B cell (primary cell): ENCODE measurements at regions of chr4 and their contacts with region 1.

Region 1: GRCh38 chr4:88211473-88212252 is 53.2 kb upstream of the ABCG2 start:
- DNase-seq: peak; percentile 73
- ATAC-seq: peak; percentile 57
- H3K4me3 ChIP-seq: no peak overlapping the region
- H3K4me3 Mint-ChIP-seq: no peak overlapping the region
- H3K27ac ChIP-seq: no peak overlapping the region
- H3K27ac Mint-ChIP-seq: no peak overlapping the region
- H3K4me1 ChIP-seq: no peaks in the 10 kb centered on the region
- H3K4me1 Mint-ChIP-seq: no peaks in the 10 kb centered on the region
- H3K27me3 ChIP-seq: peaks cover 0 to 2% (median 0%) of the 10 kb centered on the region in 4 experiments
- H3K27me3 Mint-ChIP-seq: no peaks in the 10 kb centered on the region
- CTCF ChIP-seq: peak; percentile 89

Region 2: DNA sequence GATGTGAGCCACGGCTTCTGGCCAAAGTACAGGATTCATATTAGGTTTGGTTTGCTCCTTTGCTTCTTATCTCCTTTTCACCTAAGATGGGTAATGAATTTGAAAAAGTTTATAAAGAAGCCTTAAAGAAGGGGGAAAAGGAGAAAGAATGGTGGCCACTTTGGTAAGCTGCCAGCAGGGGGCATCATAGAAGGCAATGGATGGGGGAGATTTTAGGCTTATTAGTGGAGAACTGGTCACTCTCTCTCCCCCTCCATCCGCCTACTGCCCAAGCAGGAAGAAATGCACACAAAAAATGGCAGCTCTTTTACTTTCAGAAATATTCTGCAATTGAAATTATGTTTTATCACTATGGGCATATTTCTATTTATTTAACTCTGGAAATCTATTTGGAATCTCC is 714.5 kb before region 1 on chr4:
- CTCF ChIA-PET with region 1: interaction called, 6 read pairs
- POLR2A ChIA-PET with region 1: no interaction called
- intact Hi-C with region 1: loop called (anchors 2 kb)
- DNase-seq: no peak
- ATAC-seq: no peak
- H3K4me3 ChIP-seq: no peak overlapping the region
- H3K4me3 Mint-ChIP-seq: no peak overlapping the region
- H3K27ac ChIP-seq: no peak overlapping the region
- H3K27ac Mint-ChIP-seq: no peak overlapping the region
- H3K4me1 ChIP-seq: no peaks in the 10 kb centered on the region
- H3K4me1 Mint-ChIP-seq: peaks cover 10% of the 10 kb centered on the region
- H3K27me3 ChIP-seq: no peaks in the 10 kb centered on the region
- H3K27me3 Mint-ChIP-seq: no peaks in the 10 kb centered on the region
- CTCF ChIP-seq: peak; percentile 42

Region 3: DNA sequence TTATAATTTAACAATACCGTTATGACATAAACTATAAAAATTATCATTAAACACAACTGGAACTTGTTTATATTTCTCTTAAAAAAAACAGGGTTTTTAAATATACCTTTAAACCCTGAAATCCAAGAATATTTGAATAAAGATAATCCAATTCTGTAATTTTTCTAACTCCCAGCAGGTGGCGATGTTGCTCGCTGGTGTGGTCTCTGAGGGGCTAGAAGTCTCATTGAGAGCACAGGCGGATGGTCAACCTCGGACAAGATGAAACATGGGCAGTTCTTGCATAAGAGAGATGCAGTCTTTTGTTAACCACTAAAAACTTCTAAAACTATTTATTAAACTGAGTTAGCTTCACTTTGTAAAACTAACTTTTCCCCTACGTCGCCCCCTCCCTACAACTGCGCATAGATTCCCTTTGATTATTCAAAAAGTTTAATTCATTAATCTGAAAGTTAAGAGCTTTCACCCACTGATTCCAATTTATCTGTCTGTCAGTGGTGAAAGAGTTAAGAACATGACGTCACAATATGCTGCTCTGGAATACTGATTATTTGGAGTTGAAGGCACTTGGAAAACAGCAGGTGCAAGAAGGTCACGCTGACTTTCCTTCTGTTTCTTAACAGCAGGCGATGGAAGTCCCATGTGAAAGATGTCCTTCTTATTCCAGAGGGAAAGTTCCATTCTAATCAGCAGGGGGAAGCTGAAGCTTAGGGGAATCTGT is 532.1 kb before region 1 on chr4:
- CTCF ChIA-PET with region 1: interaction called, 20 read pairs
- POLR2A ChIA-PET with region 1: no interaction called
- intact Hi-C with region 1: no loop called
- DNase-seq: peak; percentile 41
- ATAC-seq: no peak
- H3K4me3 ChIP-seq: no peak overlapping the region
- H3K4me3 Mint-ChIP-seq: no peak overlapping the region
- H3K27ac ChIP-seq: no peak overlapping the region
- H3K27ac Mint-ChIP-seq: no peak overlapping the region
- H3K4me1 ChIP-seq: no peaks in the 10 kb centered on the region
- H3K4me1 Mint-ChIP-seq: peaks cover 2% of the 10 kb centered on the region
- H3K27me3 ChIP-seq: no peaks in the 10 kb centered on the region
- H3K27me3 Mint-ChIP-seq: no peaks in the 10 kb centered on the region
- CTCF ChIP-seq: peak; percentile 86

Region 4: DNA sequence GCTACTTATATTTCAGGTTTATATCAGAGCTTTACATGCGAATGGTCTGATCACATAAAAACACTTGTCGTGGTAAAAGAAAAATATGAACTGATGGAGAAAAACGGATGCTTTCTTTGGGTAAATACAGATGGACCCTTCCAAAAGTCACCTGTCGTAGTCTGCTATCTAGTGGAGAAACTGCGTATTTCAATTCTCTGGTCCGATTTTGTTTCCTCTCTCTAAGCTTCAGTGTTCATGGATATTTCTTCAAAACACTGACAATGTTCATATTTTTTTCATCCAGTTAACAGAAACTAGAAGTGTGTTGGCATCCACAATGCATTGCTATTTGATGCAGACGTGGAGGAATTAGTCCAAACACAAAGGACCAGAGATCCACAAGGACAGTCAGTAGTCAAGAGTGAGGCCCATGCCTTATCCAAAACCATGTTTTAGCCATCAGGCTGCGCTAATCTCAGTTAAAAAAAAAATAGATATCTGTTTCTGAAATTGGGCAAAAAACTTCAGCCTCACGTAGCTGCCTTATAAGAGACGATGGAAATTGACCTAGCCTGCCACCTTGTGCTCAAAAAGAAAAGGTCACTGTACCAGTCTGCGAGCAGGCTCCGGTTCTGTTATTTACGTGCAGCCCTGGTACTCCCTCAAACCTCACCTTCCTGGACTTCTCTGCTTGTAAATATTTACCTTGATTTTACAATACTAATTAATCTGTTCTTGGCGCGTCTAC is 362.9 kb before region 1 on chr4:
- CTCF ChIA-PET with region 1: interaction called, 15 read pairs
- POLR2A ChIA-PET with region 1: no interaction called
- intact Hi-C with region 1: no loop called
- DNase-seq: peak; percentile 44
- ATAC-seq: no peak
- H3K4me3 ChIP-seq: peak overlapping the region in 4 of 5 experiments; percentile 14 to 48 (median 32)
- H3K4me3 Mint-ChIP-seq: peak overlapping the region; percentile 58
- H3K27ac ChIP-seq: no peak overlapping the region
- H3K27ac Mint-ChIP-seq: no peak overlapping the region
- H3K4me1 ChIP-seq: peaks cover 4 to 7% of the 10 kb centered on the region in 2 donors
- H3K4me1 Mint-ChIP-seq: peaks cover 7% of the 10 kb centered on the region
- H3K27me3 ChIP-seq: peaks cover 0 to 3% (median 0%) of the 10 kb centered on the region in 4 experiments
- H3K27me3 Mint-ChIP-seq: peaks cover 12% of the 10 kb centered on the region
- CTCF ChIP-seq: peak; percentile 66

Region 5: GRCh38 chr4:88033309-88033708 is 178.4 kb before region 1 on chr4:
- CTCF ChIA-PET with region 1: interaction called, 105 read pairs
- POLR2A ChIA-PET with region 1: no interaction called
- intact Hi-C with region 1: no loop called
- DNase-seq: peak; percentile 64
- ATAC-seq: peak; percentile 43
- H3K4me3 ChIP-seq: no peak overlapping the region
- H3K4me3 Mint-ChIP-seq: no peak overlapping the region
- H3K27ac ChIP-seq: no peak overlapping the region
- H3K27ac Mint-ChIP-seq: no peak overlapping the region
- H3K4me1 ChIP-seq: no peaks in the 10 kb centered on the region
- H3K4me1 Mint-ChIP-seq: no peaks in the 10 kb centered on the region
- H3K27me3 ChIP-seq: no peaks in the 10 kb centered on the region
- H3K27me3 Mint-ChIP-seq: no peaks in the 10 kb centered on the region
- CTCF ChIP-seq: peak; percentile 71